Vagina (tissue), 2 donors: ENCODE measurements at regions of chr1 and their contacts with region 1.

Region 1: GRCh38 chr1:229507951-229508822 is at the start of gene NUP133:
- DNase-seq: peak; percentile 96 to 97
- H3K4me3 ChIP-seq: peak within 1 kb of the TSS; percentile 70 to 92
- H3K27ac ChIP-seq: peak within 1 kb of the TSS; percentile 93
- H3K4me1 ChIP-seq: peaks cover 18% of the 10 kb centered on the region
- H3K27me3 ChIP-seq: no peaks in the 10 kb centered on the region
- CTCF ChIP-seq: no peak
- POLR2A ChIP-seq: peak in 1 of 2 donors; percentile 85
- total RNA-seq, gene NUP133: 38.3 TPM

Region 2: GRCh38 chr1:228165372-228166169 is 1342.6 kb before region 1 on chr1 and contains the start of gene IBA57:
- intact Hi-C with region 1: loop called (anchors 5 kb)
- DNase-seq: peak in 1 of 2 donors; percentile 100
- H3K4me3 ChIP-seq: peak within 1 kb of the TSS; percentile 77 to 78
- H3K27ac ChIP-seq: peak within 1 kb of the TSS; percentile 99
- H3K4me1 ChIP-seq: peaks cover 50% of the 10 kb centered on the region
- H3K27me3 ChIP-seq: no peaks in the 10 kb centered on the region
- CTCF ChIP-seq: peak; percentile 65 to 90 (median 86)
- POLR2A ChIP-seq: peak in 1 of 2 donors; percentile 86
- total RNA-seq, gene IBA57: 3.4 TPM

Region 3: GRCh38 chr1:229378586-229379367 is 129.4 kb before region 1 on chr1:
- intact Hi-C with region 1: no loop called
- DNase-seq: peak; percentile 28 to 40
- H3K4me3 ChIP-seq: no peak overlapping the region
- H3K27ac ChIP-seq: no peak overlapping the region
- H3K4me1 ChIP-seq: no peaks in the 10 kb centered on the region
- H3K27me3 ChIP-seq: no peaks in the 10 kb centered on the region
- CTCF ChIP-seq: no peak
- POLR2A ChIP-seq: no peak